Activated naive CD8-positive, alpha-beta T cell treated with anti-CD3 and anti-CD28 coated beads, Interleukin-2, amount 10 ng/mL, durations not matched to agents 7 days and 5 days (primary cell): ENCODE measurements at regions of chr17 and their contacts with region 1.

Region 1: GRCh38 chr17:16353317-16354174 is at the start of gene CENPV:
- DNase-seq: peak; percentile 83
- ATAC-seq: peak; percentile 83
- H3K4me3 Mint-ChIP-seq: peak within 1 kb of the TSS; percentile 94
- H3K27ac Mint-ChIP-seq: peak within 1 kb of the TSS; percentile 75
- H3K4me1 Mint-ChIP-seq: peaks cover 23% of the 10 kb centered on the region
- H3K27me3 Mint-ChIP-seq: peaks cover 6% of the 10 kb centered on the region
- total RNA-seq, gene CENPV: 18.6 to 19.7 TPM

Region 2: GRCh38 chr17:16285957-16286640 is 67.4 kb before region 1 on chr17:
- POLR2A ChIA-PET with region 1: interaction called, 13 read pairs
- DNase-seq: peak; percentile 73
- ATAC-seq: peak; percentile 97
- H3K4me3 Mint-ChIP-seq: peak overlapping the region; percentile 65
- H3K27ac Mint-ChIP-seq: peak overlapping the region; percentile 95
- H3K4me1 Mint-ChIP-seq: peaks cover 44% of the 10 kb centered on the region
- H3K27me3 Mint-ChIP-seq: no peaks in the 10 kb centered on the region

Region 3: DNA sequence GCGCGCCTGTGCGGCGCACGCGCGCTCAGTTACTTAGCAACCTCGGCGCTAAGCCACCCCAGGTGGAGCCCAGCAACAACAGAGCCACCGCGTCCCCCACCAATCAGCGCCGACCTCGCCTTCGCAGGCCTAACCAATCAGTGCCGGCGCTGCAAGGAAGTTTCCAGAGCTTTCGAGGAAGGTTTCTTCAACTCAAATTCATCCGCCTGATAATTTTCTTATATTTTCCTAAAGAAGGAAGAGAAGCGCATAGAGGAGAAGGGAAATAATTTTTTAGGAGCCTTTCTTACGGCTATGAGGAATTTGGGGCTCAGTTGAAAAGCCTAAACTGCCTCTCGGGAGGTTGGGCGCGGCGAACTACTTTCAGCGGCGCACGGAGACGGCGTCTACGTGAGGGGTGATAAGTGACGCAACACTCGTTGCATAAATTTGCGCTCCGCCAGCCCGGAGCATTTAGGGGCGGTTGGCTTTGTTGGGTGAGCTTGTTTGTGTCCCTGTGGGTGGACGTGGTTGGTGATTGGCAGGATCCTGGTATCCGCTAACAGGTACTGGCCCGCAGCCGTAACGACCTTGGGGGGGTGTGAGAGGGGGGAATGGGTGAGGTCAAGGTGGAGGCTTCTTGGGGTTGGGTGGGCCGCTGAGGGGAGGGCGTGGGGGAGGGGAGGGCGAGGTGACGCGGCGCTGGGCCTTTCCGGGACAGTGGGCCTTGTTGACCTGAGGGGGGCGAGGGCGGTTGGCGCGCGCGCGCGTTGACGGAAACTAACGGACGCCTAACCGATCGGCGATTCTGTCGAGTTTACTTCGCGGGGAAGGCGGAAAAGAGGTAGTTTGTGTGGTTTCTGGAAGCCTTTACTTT is 27.3 kb after region 1 on chr17 and contains the start of gene UBB:
- POLR2A ChIA-PET with region 1: interaction called, 13 read pairs
- DNase-seq: peak; percentile 89
- ATAC-seq: peak; percentile 96
- H3K4me3 Mint-ChIP-seq: peak within 1 kb of the TSS; percentile 96
- H3K27ac Mint-ChIP-seq: peak within 1 kb of the TSS; percentile 93
- H3K4me1 Mint-ChIP-seq: peaks cover 24% of the 10 kb centered on the region
- H3K27me3 Mint-ChIP-seq: no peaks in the 10 kb centered on the region
- total RNA-seq, gene UBB: 1,069 to 1,087 TPM